Naive thymus-derived CD8-positive, alpha-beta T cell (primary cell): ENCODE measurements at regions of chr6 and their contacts with region 1.

Region 1: DNA sequence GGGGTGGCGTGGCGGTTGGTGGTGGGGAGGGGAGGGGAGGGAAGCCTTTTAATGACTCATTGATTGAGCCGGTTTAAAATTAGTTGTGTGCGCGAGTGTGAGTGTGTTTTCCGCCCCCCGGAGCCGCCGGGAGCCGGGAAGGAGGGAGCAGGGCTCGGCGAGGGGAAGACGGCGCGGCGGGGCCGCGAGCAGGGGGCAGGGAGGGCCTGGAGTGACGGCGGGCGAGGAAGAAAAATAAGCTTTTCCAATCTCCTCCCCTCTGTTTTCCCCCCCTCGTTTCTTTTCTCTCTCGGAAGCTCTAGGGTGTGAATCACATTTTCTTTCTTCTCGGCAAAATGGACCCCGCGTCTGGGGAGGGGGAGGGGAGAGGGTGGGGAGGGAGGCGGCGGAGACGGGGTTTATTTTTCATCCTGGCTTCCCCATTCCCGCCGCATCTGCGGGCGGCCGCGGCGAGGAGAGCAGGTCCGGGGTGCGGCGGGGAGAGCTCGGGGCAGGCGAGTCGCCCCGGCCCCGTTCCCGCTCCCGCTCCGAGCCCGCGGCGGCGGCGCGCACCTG is 847 bp downstream of the BICRAL start:
- DNase-seq: peak in 9 of 10 donors; percentile 68 to 93 (median 75)
- ATAC-seq: peak; percentile 49 to 61
- H3K4me3 Mint-ChIP-seq: peak overlapping the region in 9 of 10 donors; percentile 95 to 100 (median 99)
- H3K27ac Mint-ChIP-seq: peak overlapping the region in 8 of 10 donors; percentile 98 to 100 (median 100)
- H3K4me1 Mint-ChIP-seq: peaks cover 12 to 30% (median 22%) of the 10 kb centered on the region in 4 donors
- H3K27me3 Mint-ChIP-seq: no peaks in the 10 kb centered on the region

Region 2: DNA sequence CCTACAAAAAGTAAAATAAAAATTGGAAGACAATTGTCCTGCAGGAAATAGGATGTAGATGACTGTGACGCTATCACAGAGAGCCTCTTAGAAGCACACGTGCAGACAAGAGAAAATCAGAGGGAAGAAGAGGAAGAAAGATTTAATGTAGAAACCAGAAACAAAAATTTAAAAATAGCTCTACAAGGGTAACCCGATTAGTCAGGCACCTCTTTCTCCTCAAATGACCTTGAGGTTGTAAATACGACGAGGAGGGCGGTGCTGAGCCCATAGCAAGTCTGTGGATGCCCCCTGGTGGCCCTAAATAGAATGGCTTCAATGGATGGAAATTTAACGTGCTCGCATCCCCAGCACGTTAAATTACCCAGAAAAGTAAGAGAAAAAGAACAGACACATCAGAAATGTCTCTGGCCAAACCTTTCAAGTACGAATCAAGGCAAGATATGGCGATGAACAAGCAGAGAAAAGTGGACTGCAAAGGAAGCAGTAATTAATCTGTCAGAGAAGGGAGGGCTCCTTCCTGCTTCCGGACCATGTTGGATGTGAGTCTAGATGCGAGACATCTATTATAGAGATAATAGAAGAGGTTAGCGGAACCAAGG is 56.1 kb before region 1 on chr6:
- POLR2A ChIA-PET with region 1: interaction called, 144 read pairs
- DNase-seq: peak; percentile 43 to 91 (median 77)
- ATAC-seq: peak; percentile 93 to 98
- H3K4me3 Mint-ChIP-seq: peak overlapping the region; percentile 75 to 98 (median 90)
- H3K27ac Mint-ChIP-seq: peak overlapping the region; percentile 93 to 99 (median 98)
- H3K4me1 Mint-ChIP-seq: peaks cover 11 to 25% (median 19%) of the 10 kb centered on the region in 4 donors
- H3K27me3 Mint-ChIP-seq: no peaks in the 10 kb centered on the region

Region 3: GRCh38 chr6:42758756-42759430 is 23.8 kb before region 1 on chr6:
- POLR2A ChIA-PET with region 1: interaction called, 852 read pairs
- DNase-seq: no peak
- ATAC-seq: no peak
- H3K4me3 Mint-ChIP-seq: no peak overlapping the region
- H3K27ac Mint-ChIP-seq: peak overlapping the region in 3 of 10 donors; percentile 52 to 89 (median 64)
- H3K4me1 Mint-ChIP-seq: peaks cover 20 to 50% (median 33%) of the 10 kb centered on the region in 4 donors
- H3K27me3 Mint-ChIP-seq: no peaks in the 10 kb centered on the region

Region 4: DNA sequence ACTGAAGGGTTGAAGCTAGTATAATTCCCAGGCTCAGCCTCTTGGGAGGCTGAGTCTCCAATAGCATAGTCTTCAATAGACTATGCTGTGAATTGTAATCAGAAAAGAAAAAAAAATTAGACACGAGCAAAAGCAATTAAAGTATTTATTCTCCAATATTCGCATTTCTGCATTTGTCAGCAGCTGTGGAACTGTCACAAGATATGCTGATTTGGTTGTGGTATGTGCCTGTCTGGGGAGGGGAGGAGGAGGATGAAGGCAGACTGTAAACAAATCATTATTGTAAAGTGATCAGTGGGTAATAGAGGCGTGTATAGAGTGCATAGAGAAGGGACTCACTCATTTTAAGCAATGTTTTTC is 11.0 kb before region 1 on chr6:
- POLR2A ChIA-PET with region 1: interaction called, 624 read pairs
- DNase-seq: peak in 2 of 10 donors; percentile 63 to 66
- ATAC-seq: peak; percentile 20 to 50
- H3K4me3 Mint-ChIP-seq: peak overlapping the region; percentile 65 to 91 (median 84)
- H3K27ac Mint-ChIP-seq: peak overlapping the region; percentile 98 to 100 (median 100)
- H3K4me1 Mint-ChIP-seq: peaks cover 38 to 82% (median 77%) of the 10 kb centered on the region in 4 donors
- H3K27me3 Mint-ChIP-seq: no peaks in the 10 kb centered on the region

Region 5: GRCh38 chr6:42819803-42820511 is 37.3 kb after region 1 on chr6:
- POLR2A ChIA-PET with region 1: interaction called, 20 read pairs
- DNase-seq: peak in 6 of 10 donors; percentile 2 to 48 (median 21)
- ATAC-seq: peak; percentile 85 to 91
- H3K4me3 Mint-ChIP-seq: peak overlapping the region in 5 of 10 donors; percentile 16 to 36 (median 28)
- H3K27ac Mint-ChIP-seq: peak overlapping the region; percentile 45 to 87 (median 73)
- H3K4me1 Mint-ChIP-seq: peaks cover 19 to 36% (median 26%) of the 10 kb centered on the region in 4 donors
- H3K27me3 Mint-ChIP-seq: no peaks in the 10 kb centered on the region

Region 6: DNA sequence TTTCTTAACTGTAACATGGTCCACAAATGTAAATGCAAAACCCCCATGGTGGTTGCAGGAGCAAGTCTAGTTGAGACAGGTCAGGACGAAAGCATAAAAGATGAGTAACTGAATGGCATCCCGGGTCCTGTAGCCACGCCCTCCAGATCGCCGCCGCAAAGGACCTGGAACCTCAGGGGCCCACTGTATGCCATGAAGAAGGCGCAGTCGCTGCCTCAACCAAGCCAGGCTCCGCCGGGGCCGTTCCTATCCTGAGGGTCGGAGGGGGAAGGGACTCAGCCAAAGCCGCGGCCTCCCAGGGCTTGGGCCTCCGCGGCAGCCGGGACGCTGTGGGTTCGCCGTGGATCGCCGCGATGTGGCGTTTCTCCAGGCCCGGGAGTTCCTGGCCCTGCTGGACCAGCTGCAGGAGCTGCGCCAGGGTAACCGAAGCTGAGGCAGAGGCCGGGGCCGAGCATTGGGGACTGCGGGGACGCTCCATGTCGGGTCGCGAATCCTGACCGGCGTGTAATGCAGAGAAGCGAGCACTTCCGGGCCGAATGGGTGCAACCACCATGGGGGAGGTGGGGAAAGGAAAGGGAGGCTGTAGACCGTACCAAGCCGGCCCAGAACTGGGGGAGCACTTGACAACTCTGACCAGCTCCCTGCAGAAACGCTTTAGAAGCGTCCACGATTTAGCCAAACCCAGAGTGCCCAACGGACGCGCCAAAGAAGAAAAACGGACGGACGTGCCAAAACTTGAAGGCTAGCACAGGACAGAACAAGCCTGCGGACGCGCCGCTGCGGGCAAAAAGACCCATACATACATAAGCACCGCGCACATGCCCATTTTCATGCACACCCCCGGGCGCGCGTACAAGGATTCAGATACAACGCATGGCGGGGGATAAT is 107.9 kb after region 1 on chr6:
- POLR2A ChIA-PET with region 1: interaction called, 43 read pairs
- DNase-seq: peak; percentile 69 to 94 (median 85)
- ATAC-seq: peak; percentile 87 to 94
- H3K4me3 Mint-ChIP-seq: peak overlapping the region; percentile 92 to 99 (median 98)
- H3K27ac Mint-ChIP-seq: peak overlapping the region; percentile 92 to 98 (median 96)
- H3K4me1 Mint-ChIP-seq: peaks cover 7 to 37% (median 19%) of the 10 kb centered on the region in 4 donors
- H3K27me3 Mint-ChIP-seq: no peaks in the 10 kb centered on the region

Region 7: GRCh38 chr6:43608807-43609206 is 826.1 kb after region 1 on chr6:
- POLR2A ChIA-PET with region 1: no interaction called
- DNase-seq: no peak
- ATAC-seq: no peak
- H3K4me3 Mint-ChIP-seq: no peak overlapping the region
- H3K27ac Mint-ChIP-seq: peak overlapping the region in 4 of 10 donors; percentile 1 to 79 (median 60)
- H3K4me1 Mint-ChIP-seq: peaks cover 0 to 12% (median 8%) of the 10 kb centered on the region in 4 donors
- H3K27me3 Mint-ChIP-seq: no peaks in the 10 kb centered on the region